HEK293T (cell line): ENCODE measurements at regions of chr2 and their contacts with region 1.

Region 1: GRCh38 chr2:24971536-24972314 is at the start of gene DNAJC27:
- DNase-seq: peak; percentile 97

Region 2: DNA sequence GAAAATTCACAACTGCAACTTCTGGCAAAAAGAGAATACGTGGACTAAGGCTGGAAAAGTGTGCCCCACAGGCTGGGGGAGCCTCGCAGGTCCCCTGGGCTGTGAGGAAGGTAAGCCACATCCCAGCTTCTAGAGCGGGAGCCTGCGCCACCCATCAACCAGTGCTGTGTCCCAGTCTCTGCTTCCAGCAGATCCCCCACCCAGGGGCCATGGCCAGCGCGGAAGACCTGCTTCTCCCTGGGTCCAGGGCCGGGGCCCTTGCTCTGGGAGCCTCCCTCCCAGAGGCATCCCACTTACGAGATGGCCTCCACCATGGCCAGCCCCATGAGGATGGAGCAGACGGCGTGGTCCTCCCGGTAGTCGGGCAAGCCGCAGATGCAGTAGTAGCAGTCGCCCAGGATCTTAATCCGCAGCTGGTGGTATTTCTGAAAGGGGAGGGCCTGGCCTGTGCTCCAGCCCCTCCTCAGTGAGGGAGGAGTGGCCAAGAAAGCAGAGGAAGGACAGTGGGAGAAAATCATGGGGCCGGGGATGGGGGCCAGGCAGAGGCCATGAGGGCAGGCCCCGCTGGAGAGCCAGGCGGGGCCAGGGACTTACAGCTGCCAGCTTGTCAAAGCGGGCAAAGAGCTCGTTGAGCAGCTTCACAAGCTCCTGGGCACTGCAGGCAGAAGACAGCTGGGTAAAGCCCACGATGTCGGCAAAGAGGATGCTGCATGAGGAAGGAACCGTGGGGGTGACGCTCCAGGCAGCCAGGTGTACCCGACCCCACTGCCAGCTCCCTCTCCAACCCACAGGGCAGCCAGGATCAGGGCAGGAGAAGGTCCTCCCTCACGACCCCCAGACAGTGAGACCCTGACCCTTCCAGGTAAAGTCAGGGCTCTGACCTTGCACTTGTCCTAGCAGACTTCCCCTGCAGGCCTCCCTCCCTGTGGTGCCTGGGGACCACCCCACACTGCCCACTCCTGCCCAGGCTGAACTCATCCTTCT is 130.5 kb before region 1 on chr2:
- CTCF ChIA-PET with region 1: no interaction called
- POLR2A ChIA-PET with region 1: no interaction called
- DNase-seq: no peak

Region 3: DNA sequence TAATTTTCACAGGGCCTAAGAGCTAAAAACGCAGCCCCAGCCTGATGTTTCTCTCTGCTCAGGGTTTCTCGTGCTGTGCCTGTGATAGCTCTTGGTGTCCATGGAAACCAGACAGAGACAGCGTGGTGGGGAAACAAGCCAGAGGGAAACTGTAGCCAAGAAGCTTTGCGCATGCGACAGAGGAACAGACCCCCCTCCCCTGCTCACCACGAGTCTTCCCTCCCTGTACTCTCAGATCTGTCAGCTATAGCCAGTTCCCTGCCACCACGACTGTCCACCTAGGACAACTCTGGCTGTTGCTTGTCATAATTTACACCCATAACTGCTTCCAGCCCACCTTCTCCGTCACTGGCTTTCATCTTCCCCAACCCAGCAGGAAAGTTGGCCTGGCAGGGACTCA is 13.2 kb after region 1 on chr2:
- CTCF ChIA-PET with region 1: no interaction called
- POLR2A ChIA-PET with region 1: no interaction called
- DNase-seq: no peak

Region 4: DNA sequence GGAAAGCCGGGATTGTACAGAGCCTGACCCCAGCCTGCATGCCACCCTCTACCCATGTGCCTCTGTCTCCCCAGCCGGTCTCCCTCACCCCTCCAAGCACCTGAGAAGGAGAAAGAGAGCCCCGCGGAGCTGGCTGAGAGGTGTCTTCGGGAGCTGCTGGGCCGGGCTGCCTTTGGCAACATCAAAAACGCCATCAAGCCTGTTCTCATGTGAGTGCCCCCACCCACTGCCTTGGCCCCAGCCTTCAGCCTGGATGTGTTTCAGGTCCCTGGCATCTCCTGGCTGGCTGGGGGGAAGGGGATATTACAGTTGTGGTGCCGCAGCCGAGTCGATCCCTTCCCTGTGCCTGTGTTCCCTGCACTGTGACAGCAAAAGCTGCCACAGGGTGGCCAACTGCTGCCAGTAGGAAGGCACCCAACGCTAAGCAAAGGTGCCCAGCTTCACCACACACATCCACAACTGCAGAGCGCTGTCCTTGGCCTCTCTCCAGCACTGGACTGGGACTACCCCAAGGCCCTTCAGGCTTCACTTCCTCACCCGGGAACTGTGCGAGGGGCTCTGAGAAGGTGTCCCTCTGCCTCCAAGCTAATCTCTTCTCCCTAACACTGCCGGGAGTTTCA is 158.3 kb after region 1 on chr2:
- CTCF ChIA-PET with region 1: interaction called, 32 read pairs
- POLR2A ChIA-PET with region 1: interaction called, 12 read pairs
- DNase-seq: no peak

Region 5: GRCh38 chr2:25197336-25198208 is 225.8 kb after region 1 on chr2:
- CTCF ChIA-PET with region 1: interaction called, 12 read pairs
- POLR2A ChIA-PET with region 1: no interaction called
- DNase-seq: no peak